ENCODE measurements at regions of chr2 and their contacts with region 1.

Region 1: DNA sequence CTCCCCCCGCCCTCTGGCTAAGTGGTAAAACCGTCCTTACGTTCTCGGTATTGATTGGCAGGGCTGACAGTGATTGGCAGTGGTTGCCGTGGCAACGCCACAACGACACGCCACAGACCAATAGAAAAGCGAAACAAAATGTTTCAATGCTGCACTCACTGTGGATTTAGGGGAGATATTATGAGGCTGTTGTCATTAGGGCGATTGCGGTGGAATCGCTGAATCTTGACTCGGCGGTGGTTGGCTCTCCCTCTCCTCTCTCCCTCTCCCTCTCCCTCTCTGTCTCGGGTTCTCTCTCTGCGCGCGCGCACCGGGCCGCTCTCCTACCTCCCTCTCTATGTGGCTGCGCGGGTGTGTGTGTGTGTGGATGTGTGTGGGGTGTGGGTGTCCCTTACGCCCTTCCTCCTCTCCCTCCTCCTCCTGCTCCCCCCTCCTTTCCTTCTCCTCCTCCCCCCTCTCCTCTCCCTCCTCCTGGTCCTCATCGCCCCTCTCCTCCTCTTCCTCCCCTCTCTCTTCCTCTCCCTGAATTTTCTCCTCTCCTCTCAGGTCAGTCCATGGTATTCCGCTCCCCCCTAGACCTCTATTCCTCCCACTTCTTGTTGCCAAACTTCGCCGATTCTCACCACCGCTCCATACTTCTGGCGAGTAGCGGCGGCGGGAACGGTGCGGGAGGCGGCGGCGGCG is at the start of gene SIX3:
- DNase-seq: peak; percentile 89
- CTCF ChIP-seq: no peak

Region 2: DNA sequence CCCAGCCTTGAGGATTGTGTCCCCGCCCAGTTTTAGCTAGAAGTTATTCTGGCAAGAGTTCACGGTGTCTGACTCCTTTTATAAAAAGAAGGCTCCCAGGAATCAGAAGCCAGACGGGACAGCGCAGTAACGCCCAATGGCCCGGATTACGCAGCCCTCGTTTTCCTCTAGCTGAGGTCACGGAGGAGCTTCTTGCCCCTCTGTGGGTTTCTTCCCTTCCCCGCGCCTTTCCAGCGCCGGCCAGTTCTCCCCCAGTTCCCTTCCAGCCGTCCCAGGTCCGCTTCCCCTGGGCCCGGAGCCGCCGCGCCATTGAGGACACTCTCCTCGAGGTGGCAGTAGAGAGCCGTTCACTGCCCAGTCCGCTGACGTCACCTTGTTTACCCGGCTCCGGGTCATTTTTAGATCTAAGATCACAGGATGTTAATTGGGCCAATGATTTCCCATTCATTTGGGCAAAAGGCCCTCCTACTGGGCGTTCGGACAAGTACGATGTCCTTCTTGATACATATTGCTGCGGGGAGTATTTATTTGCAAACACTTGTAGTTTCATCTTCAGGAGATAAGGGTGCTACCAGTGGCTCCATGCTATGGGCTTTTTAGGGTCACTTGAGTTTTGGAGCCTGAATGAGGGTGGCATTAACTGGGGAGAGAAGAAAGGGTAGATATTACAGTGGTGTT is 854.5 kb before region 1 on chr2:
- in situ Hi-C with region 1: loop called (anchors 25 kb)
- DNase-seq: peak; percentile 79
- CTCF ChIP-seq: peak; percentile 93